ENCODE measurements at regions of chr12 and their contacts with region 1.

Region 1: GRCh38 chr12:68451261-68452077 is 119.3 kb upstream of the MDM1 start:
- DNase-seq: peak; percentile 87
- H3K4me3 Mint-ChIP-seq: peak overlapping the region; percentile 52
- H3K27ac Mint-ChIP-seq: peak overlapping the region; percentile 98
- H3K4me1 Mint-ChIP-seq: peaks cover 81% of the 10 kb centered on the region
- H3K27me3 Mint-ChIP-seq: no peaks in the 10 kb centered on the region

Region 2: GRCh38 chr12:68303850-68304249 is 147.6 kb before region 1 on chr12:
- intact Hi-C with region 1: no loop called
- DNase-seq: no peak
- H3K4me3 Mint-ChIP-seq: no peak overlapping the region
- H3K27ac Mint-ChIP-seq: no peak overlapping the region
- H3K4me1 Mint-ChIP-seq: peaks cover 26% of the 10 kb centered on the region
- H3K27me3 Mint-ChIP-seq: no peaks in the 10 kb centered on the region

Region 3: DNA sequence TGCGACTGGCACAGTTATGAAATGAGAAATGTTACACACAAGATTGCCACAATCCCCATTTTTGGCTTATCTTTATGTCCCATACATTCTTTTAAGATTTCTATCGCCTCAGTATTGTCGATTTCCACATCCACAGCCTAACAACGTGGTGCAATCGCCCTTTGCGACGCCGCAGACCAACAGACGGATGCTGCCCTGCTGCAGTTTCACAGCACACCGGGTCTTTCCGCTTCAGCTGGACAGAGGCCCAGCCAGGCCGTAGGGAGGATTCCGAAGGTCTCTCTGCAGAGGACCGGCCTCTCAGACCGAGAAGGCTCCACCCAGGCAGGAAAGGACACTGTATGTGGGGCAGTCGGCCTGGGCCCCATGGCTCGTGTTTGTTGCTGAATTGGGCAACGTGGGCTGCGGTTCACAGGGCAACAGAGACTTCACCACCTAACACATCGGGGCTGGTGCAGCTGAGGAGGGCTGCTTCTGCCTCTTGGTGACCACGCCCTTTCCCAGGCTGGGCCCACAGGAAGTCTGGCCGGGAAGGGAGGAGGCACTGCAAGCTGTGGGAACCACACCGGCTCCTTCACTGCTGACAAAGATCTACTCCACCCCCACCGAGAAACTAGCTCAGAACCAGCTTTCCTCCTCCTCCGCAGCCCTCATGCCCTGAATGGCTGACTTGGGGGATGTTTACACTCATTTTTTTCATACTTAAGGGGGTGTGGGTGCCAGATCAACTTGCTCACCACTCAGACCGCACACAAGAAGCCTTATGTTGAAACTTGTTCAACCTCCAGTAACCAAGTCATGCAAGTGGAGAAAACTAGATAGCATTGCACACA is 86.4 kb before region 1 on chr12:
- intact Hi-C with region 1: loop called (anchors 1 kb)
- DNase-seq: peak; percentile 95
- H3K4me3 Mint-ChIP-seq: peak overlapping the region; percentile 83
- H3K27ac Mint-ChIP-seq: peak overlapping the region; percentile 95
- H3K4me1 Mint-ChIP-seq: peaks cover 56% of the 10 kb centered on the region
- H3K27me3 Mint-ChIP-seq: no peaks in the 10 kb centered on the region

Region 4: DNA sequence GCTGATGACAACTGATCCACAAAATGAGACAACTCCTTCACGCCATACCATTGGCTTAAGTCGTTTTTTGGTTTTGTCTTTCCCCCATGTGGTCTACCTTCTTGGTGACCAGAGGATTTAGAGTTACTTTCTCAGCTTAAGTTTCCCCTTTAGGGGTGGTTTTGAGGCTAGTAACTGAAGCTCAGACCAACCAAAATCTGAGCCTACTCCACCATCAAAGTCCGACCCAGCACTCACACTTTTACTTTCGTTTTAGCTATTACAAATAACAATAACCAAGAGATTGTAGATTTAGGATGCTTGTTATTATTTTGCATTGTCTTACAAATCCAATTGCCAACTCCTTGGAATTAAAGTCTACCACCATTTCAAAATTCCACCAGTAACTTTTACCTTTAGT is 11.3 kb after region 1 on chr12:
- intact Hi-C with region 1: loop called (anchors 1 kb)
- DNase-seq: peak; percentile 73
- H3K4me3 Mint-ChIP-seq: peak overlapping the region; percentile 73
- H3K27ac Mint-ChIP-seq: peak overlapping the region; percentile 84
- H3K4me1 Mint-ChIP-seq: peaks cover 5% of the 10 kb centered on the region
- H3K27me3 Mint-ChIP-seq: no peaks in the 10 kb centered on the region

Region 5: DNA sequence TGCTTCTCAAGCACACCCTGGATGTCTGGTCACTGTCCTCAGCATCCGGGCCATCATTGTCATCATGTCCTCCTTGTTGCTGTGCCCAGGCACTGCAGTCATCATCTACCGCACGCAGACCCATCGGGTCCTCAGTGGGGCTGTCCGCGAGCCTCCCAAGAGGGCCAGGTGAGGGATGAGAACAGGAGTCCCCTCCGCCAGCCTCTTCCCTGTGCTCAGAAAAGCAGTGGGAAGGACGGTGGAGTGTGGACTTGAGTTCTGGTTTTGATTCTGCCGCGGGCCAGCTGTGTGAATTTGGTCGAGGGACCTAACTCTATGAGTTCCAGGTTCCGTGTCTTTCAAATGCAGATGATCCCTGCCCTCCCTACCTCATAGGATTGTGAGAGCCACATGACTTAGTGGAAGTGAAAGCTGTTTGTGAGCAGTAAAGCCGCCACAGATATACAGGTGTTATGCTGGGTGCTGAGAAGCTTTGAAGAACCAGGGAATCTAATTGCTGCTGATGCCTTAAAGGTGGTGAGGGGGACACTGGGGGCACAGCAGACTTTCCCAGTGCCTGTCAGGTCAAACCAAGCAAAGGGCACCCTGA is 36.3 kb after region 1 on chr12:
- intact Hi-C with region 1: no loop called
- DNase-seq: no peak
- H3K4me3 Mint-ChIP-seq: peak overlapping the region; percentile 12
- H3K27ac Mint-ChIP-seq: no peak overlapping the region
- H3K4me1 Mint-ChIP-seq: peaks cover 26% of the 10 kb centered on the region
- H3K27me3 Mint-ChIP-seq: no peaks in the 10 kb centered on the region

Region 6: GRCh38 chr12:68538726-68539614 is 87.5 kb after region 1 on chr12:
- intact Hi-C with region 1: loop called (anchors 1 kb)
- DNase-seq: peak; percentile 90
- H3K4me3 Mint-ChIP-seq: peak overlapping the region; percentile 57
- H3K27ac Mint-ChIP-seq: peak overlapping the region; percentile 40
- H3K4me1 Mint-ChIP-seq: peaks cover 35% of the 10 kb centered on the region
- H3K27me3 Mint-ChIP-seq: no peaks in the 10 kb centered on the region

Region 7: DNA sequence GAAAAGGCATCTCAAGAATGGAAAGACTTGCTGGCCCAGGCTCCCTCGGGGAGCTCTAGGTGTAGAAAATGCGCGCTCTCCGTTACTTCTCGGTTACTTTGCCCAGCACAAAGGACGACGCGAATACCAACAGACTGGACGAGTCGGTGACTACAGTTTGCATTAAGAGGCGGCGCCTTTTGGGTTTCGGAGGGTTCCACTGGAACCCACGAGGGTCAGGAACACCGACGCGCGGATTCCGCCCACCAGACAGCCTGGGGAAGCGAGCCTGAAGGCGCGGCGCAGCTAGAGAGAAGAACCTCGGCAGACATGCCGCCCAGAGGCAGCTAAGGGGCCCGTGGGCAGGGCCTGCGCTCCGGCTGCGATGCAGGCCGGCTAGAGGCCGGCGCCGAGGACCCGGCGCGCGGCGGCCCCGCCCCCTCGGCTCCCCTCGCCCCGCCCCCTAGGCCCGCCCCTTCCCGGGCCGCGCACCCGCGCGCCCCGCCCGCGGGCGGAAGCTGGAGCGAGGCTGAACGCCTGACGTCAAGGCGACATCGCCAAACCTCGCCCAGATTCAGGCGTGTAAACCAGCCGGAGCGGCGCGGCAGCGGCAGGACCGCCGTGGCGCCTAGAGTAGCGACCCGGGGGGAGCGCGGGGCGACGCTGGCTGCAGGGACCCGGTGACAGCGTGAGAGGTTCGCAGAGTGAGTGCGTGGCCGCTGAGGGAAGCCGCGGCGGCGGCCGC is 159.1 kb after region 1 on chr12 and contains the start of gene RAP1B:
- intact Hi-C with region 1: loop called (anchors 1 kb)
- DNase-seq: peak; percentile 97
- H3K4me3 Mint-ChIP-seq: peak within 1 kb of the TSS; percentile 99
- H3K27ac Mint-ChIP-seq: peak within 1 kb of the TSS; percentile 98
- H3K4me1 Mint-ChIP-seq: peaks cover 37% of the 10 kb centered on the region
- H3K27me3 Mint-ChIP-seq: no peaks in the 10 kb centered on the region
- total RNA-seq, gene RAP1B: 207 and 209 TPM in 2 replicates

Region 8: GRCh38 chr12:68807576-68808387 is 356.3 kb after region 1 on chr12 and contains the start of gene MDM2:
- intact Hi-C with region 1: loop called (anchors 10 kb)
- DNase-seq: peak; percentile 99
- H3K4me3 Mint-ChIP-seq: peak within 1 kb of the TSS; percentile 90
- H3K27ac Mint-ChIP-seq: peak within 1 kb of the TSS; percentile 98
- H3K4me1 Mint-ChIP-seq: peaks cover 25% of the 10 kb centered on the region
- H3K27me3 Mint-ChIP-seq: peaks cover 3% of the 10 kb centered on the region
- total RNA-seq, gene MDM2: 227 and 233 TPM in 2 replicates